CD4-positive, alpha-beta memory T cell (primary cell): ENCODE measurements at regions of chr5 and their contacts with region 1.

Region 1: DNA sequence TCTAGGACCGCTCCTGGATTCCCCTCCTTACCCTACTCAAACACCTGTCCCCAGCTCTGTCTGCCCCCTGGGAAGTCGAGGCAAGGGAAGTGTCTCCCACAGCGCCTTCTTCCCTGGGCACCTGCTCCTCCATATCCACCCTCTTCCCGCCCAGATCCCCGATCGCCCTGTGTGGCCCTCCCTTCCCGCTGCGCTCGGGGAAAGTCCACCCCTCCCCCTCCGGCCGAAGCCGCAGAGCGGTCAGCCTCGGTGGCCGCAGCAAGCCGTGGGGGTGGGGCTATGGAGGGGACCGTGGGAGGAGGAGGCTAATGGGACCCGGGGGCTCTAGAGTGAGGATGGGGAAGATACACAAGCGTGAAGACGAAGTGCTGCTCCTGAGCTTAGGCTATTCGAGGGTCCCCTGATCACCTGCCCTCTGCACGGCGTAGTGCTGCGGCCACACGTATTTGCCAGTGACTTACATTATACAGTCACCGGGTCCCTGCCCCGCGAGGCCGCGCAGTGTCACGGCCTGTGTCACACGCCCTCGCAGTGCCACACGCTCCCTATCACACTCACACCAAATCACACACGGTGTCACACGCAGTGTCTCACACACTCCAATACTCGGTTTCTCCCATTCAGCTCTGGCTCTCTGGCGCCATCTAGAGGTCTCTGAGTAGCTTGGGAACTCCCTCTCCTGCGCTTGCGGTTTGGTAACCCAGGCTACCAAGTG is 658 bp upstream of the PCDH1 start:
- DNase-seq: peak; percentile 88 to 93 (median 90)
- H3K4me3 ChIP-seq: peak overlapping the region; percentile 53 to 76
- H3K4me3 Mint-ChIP-seq: peak overlapping the region; percentile 78 to 92 (median 86)
- H3K27ac ChIP-seq: no peak overlapping the region
- H3K27ac Mint-ChIP-seq: peak overlapping the region; percentile 31 to 88 (median 62)
- H3K4me1 ChIP-seq: peaks cover 40% of the 10 kb centered on the region
- H3K4me1 Mint-ChIP-seq: peaks cover 20 to 49% (median 28%) of the 10 kb centered on the region in 4 donors
- H3K27me3 ChIP-seq: peaks cover 60% of the 10 kb centered on the region
- H3K27me3 Mint-ChIP-seq: peaks cover 54 to 63% of the 10 kb centered on the region in 2 donors

Region 2: GRCh38 chr5:141664732-141665461 is 214.0 kb before region 1 on chr5:
- CTCF ChIA-PET with region 1: interaction called, 69 read pairs
- POLR2A ChIA-PET with region 1: interaction called, 4 read pairs
- intact Hi-C with region 1: loop called (anchors 1 kb)
- DNase-seq: peak; percentile 58 to 69 (median 59)
- H3K4me3 ChIP-seq: no peak overlapping the region
- H3K4me3 Mint-ChIP-seq: no peak overlapping the region
- H3K27ac ChIP-seq: no peak overlapping the region
- H3K27ac Mint-ChIP-seq: no peak overlapping the region
- H3K4me1 ChIP-seq: no peaks in the 10 kb centered on the region
- H3K4me1 Mint-ChIP-seq: peaks cover 2 to 5% (median 4%) of the 10 kb centered on the region in 4 donors
- H3K27me3 ChIP-seq: no peaks in the 10 kb centered on the region
- H3K27me3 Mint-ChIP-seq: no peaks in the 10 kb centered on the region

Region 3: GRCh38 chr5:141701360-141702119 is 177.3 kb before region 1 on chr5:
- CTCF ChIA-PET with region 1: interaction called, 239 read pairs
- POLR2A ChIA-PET with region 1: interaction called, 22 read pairs
- intact Hi-C with region 1: loop called (anchors 1 kb)
- DNase-seq: no peak
- H3K4me3 ChIP-seq: peak overlapping the region in 1 of 2 donors; percentile 57
- H3K4me3 Mint-ChIP-seq: peak overlapping the region in 5 of 8 donors; percentile 78 to 91 (median 87)
- H3K27ac ChIP-seq: no peak overlapping the region
- H3K27ac Mint-ChIP-seq: peak overlapping the region in 5 of 7 donors; percentile 62 to 90 (median 83)
- H3K4me1 ChIP-seq: peaks cover 17% of the 10 kb centered on the region
- H3K4me1 Mint-ChIP-seq: peaks cover 9 to 29% (median 14%) of the 10 kb centered on the region in 4 donors
- H3K27me3 ChIP-seq: peaks cover 7% of the 10 kb centered on the region
- H3K27me3 Mint-ChIP-seq: peaks cover 3 to 13% of the 10 kb centered on the region in 2 donors

Region 4: DNA sequence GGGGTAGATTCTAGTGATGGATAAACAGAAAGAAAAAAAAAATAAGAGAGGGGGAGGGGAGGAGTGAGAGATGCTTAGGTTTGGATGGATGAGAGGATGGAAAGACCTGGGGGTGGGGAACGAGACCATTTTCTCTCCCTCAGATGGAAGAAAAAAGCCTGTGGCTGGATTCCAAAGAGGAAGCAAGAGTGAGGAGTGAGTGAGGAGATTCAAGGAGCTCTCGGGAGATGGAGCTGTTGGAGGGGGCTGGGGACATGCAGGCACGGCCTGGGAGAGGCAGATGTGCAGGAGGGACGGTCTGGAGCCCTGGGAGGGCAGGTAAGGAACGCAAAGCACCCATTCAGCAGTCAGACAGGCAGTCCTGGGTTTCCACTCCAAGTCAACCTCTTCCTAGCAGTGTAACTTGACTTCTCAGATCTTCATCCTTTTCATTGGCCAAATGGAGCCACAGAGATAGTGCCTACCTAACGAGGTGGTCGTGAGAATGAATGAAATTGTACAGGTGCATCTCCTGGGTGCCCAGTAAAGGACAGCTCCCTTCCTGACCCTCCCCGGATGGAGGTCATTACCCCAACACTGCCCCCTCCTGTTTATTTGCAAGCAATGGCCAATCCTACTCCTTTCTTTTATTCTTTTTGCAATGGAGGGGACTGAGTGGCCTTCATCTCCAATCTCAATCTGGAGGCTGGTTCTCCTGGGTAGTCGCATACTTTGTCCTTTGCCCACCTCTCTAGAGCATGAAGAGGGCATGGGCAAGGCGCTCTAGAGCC is 52.9 kb before region 1 on chr5:
- CTCF ChIA-PET with region 1: interaction called, 50 read pairs
- POLR2A ChIA-PET with region 1: interaction called, 4 read pairs
- intact Hi-C with region 1: loop called (anchors 1 kb)
- DNase-seq: peak in 2 of 5 donors; percentile 4 to 7
- H3K4me3 ChIP-seq: no peak overlapping the region
- H3K4me3 Mint-ChIP-seq: no peak overlapping the region
- H3K27ac ChIP-seq: no peak overlapping the region
- H3K27ac Mint-ChIP-seq: no peak overlapping the region
- H3K4me1 ChIP-seq: no peaks in the 10 kb centered on the region
- H3K4me1 Mint-ChIP-seq: peaks cover 0 to 3% (median 0%) of the 10 kb centered on the region in 4 donors
- H3K27me3 ChIP-seq: no peaks in the 10 kb centered on the region
- H3K27me3 Mint-ChIP-seq: peaks cover 4 to 10% of the 10 kb centered on the region in 2 donors

Region 5: GRCh38 chr5:141866149-141867120 is 12.4 kb before region 1 on chr5:
- CTCF ChIA-PET with region 1: interaction called, 20 read pairs
- POLR2A ChIA-PET with region 1: interaction called, 3 read pairs
- intact Hi-C with region 1: no loop called
- DNase-seq: no peak
- H3K4me3 ChIP-seq: no peak overlapping the region
- H3K4me3 Mint-ChIP-seq: no peak overlapping the region
- H3K27ac ChIP-seq: no peak overlapping the region
- H3K27ac Mint-ChIP-seq: no peak overlapping the region
- H3K4me1 ChIP-seq: no peaks in the 10 kb centered on the region
- H3K4me1 Mint-ChIP-seq: no peaks in the 10 kb centered on the region
- H3K27me3 ChIP-seq: no peaks in the 10 kb centered on the region
- H3K27me3 Mint-ChIP-seq: peaks cover 7 to 30% of the 10 kb centered on the region in 2 donors

Region 6: GRCh38 chr5:141898448-141899049 is 19.7 kb after region 1 on chr5:
- CTCF ChIA-PET with region 1: interaction called, 11 read pairs
- POLR2A ChIA-PET with region 1: no interaction called
- intact Hi-C with region 1: no loop called
- DNase-seq: no peak
- H3K4me3 ChIP-seq: no peak overlapping the region
- H3K4me3 Mint-ChIP-seq: no peak overlapping the region
- H3K27ac ChIP-seq: no peak overlapping the region
- H3K27ac Mint-ChIP-seq: no peak overlapping the region
- H3K4me1 ChIP-seq: no peaks in the 10 kb centered on the region
- H3K4me1 Mint-ChIP-seq: no peaks in the 10 kb centered on the region
- H3K27me3 ChIP-seq: no peaks in the 10 kb centered on the region
- H3K27me3 Mint-ChIP-seq: peaks cover 4 to 19% of the 10 kb centered on the region in 2 donors

Region 7: GRCh38 chr5:142145106-142145900 is 266.4 kb after region 1 on chr5:
- CTCF ChIA-PET with region 1: interaction called, 8 read pairs
- POLR2A ChIA-PET with region 1: no interaction called
- intact Hi-C with region 1: loop called (anchors 5 kb)
- DNase-seq: peak; percentile 54 to 66 (median 57)
- H3K4me3 ChIP-seq: no peak overlapping the region
- H3K4me3 Mint-ChIP-seq: no peak overlapping the region
- H3K27ac ChIP-seq: no peak overlapping the region
- H3K27ac Mint-ChIP-seq: no peak overlapping the region
- H3K4me1 ChIP-seq: no peaks in the 10 kb centered on the region
- H3K4me1 Mint-ChIP-seq: no peaks in the 10 kb centered on the region
- H3K27me3 ChIP-seq: no peaks in the 10 kb centered on the region
- H3K27me3 Mint-ChIP-seq: no peaks in the 10 kb centered on the region